ENCODE measurements at regions of chr22 and their contacts with region 1.

Region 1: DNA sequence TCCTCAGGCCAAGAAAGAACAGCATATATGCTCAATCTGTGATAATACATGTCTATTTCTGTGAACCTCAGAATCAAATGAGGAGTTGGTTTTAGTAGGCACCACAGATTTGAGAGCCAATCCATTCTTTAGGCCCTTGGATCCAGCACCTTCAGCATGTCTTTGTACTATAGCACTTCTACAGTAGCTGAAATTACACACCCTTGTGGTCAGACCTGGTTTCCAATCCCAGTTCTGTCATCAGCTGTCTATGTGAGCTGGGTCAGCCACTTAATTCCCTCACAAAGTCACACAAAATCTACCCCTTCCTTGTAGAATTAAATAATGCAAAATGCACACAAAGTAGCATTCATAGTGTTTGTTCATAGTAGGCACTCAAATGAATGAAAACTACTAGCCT is 381.3 kb upstream of the LARGE1 start:
- DNase-seq: no peak
- ATAC-seq: no peak
- H3K4me3 Mint-ChIP-seq: no peak overlapping the region
- H3K27ac Mint-ChIP-seq: no peak overlapping the region
- H3K4me1 Mint-ChIP-seq: no peaks in the 10 kb centered on the region
- H3K27me3 Mint-ChIP-seq: no peaks in the 10 kb centered on the region

Region 2: DNA sequence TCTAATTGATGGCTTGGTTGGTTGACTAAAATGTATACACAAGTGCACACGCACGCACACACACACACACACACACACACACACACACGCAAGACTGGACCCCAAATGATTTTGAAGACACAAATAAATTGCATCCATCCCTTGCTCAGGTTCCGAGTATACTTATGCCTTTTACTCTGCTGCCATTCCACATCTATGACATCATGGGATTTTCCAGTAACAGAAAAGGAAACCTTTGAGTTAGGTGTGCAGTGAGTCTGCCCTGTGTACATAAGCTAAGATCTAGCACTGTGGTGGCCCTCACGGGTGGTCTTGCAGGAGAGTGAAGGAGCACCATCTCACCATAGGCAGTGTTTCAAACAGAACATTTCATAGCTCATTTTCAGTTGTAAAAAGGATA is 360.8 kb before region 1 on chr22:
- CTCF ChIA-PET with region 1: no interaction called
- POLR2A ChIA-PET with region 1: no interaction called
- intact Hi-C with region 1: loop called in 1 of 2 experiments (anchors 5 kb)
- DNase-seq: no peak
- ATAC-seq: no peak
- H3K4me3 Mint-ChIP-seq: no peak overlapping the region
- H3K27ac Mint-ChIP-seq: no peak overlapping the region
- H3K4me1 Mint-ChIP-seq: no peaks in the 10 kb centered on the region
- H3K27me3 Mint-ChIP-seq: peaks cover 4% of the 10 kb centered on the region

Region 3: DNA sequence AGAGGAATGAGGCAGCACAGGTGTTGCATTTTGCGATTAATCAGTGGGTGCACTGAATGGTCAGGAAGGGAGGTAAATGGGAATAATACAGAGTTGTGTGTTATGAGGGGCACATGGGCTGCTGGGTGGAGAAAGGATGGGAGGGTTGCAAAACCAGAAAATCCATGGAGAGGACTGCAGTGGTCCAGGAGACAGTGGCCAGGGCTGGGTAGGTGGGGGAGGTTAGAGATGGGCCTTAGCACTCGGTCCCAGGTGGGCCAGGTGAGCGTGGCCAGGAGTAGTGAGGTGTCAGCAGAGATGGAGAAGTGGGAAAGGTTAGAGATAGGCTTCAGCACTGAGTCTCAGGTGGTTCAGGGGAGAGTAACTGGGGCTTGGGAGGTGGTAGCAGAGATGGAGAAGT is 17.8 kb after region 1 on chr22:
- CTCF ChIA-PET with region 1: no interaction called
- POLR2A ChIA-PET with region 1: no interaction called
- intact Hi-C with region 1: no loop called
- DNase-seq: no peak
- ATAC-seq: no peak
- H3K4me3 Mint-ChIP-seq: no peak overlapping the region
- H3K27ac Mint-ChIP-seq: no peak overlapping the region
- H3K4me1 Mint-ChIP-seq: no peaks in the 10 kb centered on the region
- H3K27me3 Mint-ChIP-seq: peaks cover 5% of the 10 kb centered on the region

Measured in activated CD4-positive, alpha-beta T cell treated with anti-CD3 and anti-CD28 coated beads for 36 hours (primary cell).